H1 (cell line): ENCODE measurements at regions of chr6 and their contacts with region 1.

Region 1: DNA sequence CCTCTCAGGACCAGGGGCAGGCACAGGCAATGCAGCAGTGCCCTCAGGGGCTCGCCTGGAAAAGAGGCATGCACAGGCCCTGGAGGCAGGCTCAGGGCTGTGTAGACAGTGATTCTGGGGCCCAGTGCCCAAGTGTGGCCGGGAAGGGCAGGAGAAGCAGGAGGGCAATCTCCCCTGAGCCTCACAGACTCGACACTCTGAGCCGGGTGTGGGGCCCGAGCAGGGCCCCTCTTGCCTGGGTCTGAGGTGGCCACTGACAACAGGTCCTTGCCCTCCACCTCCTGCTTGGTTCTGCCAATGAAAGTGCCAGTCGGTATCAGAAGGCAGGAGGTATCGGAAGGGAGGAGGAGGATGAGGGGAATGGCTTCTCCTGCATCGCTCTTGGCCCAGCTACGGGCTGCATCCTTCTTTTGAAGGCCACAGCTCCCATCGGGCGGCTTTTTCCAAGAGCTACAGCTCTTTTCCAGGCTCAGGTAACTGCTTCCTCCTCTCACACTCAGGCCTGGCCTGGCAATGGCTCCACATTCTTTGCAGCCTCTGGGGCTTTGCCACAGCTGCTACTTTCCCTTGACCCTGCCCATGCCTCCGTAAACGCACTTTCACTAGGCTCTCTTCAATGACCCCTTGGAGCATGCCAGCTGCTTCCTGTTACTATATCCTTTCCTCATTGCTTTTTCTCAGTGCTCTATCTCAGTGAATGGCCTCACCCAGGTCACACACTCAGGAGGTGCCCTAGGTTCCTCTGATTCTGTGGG is 24.5 kb downstream of the GABRR2 start:
- DNase-seq: no peak
- H3K4me3 ChIP-seq: no peak overlapping the region
- H3K27ac ChIP-seq: no peak overlapping the region
- H3K4me1 ChIP-seq: peaks cover 0 to 5% (median under 1%) of the 10 kb centered on the region in 4 experiments; a peak in 4 of 7 replicates
- H3K27me3 ChIP-seq: no peaks in the 10 kb centered on the region
- CTCF ChIP-seq: no peak
- EP300 ChIP-seq: no peak
- POLR2A ChIP-seq: no peak
- RAD21 ChIP-seq: no peak

Region 2: DNA sequence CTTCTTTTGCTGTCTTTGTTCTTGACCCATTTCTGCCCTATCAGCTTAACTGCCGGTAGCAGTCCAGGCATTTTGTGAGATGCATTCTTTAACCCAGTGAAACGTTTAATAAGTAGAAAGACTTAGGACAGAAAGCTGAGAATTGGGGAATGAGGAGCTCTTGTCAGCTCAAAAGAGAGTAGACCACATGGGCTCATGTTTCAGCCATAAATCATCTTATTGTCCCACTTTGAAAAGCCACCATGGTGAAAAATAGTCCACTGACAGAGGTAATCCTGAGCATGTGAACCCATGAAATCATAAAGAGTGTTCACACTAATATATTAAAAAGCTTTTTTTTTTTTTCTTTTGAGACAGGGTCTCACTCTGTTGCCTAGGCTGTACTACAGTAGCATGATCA is 1684.4 kb before region 1 on chr6:
- CTCF ChIA-PET with region 1: no interaction called
- POLR2A ChIA-PET with region 1: no interaction called
- DNase-seq: no peak
- H3K4me3 ChIP-seq: no peak overlapping the region
- H3K27ac ChIP-seq: no peak overlapping the region
- H3K4me1 ChIP-seq: peaks cover 0 to 4% (median 1%) of the 10 kb centered on the region in 4 experiments; a peak in 3 of 7 replicates
- H3K27me3 ChIP-seq: no peaks in the 10 kb centered on the region
- CTCF ChIP-seq: no peak
- EP300 ChIP-seq: no peak
- POLR2A ChIP-seq: no peak
- RAD21 ChIP-seq: no peak

Region 3: DNA sequence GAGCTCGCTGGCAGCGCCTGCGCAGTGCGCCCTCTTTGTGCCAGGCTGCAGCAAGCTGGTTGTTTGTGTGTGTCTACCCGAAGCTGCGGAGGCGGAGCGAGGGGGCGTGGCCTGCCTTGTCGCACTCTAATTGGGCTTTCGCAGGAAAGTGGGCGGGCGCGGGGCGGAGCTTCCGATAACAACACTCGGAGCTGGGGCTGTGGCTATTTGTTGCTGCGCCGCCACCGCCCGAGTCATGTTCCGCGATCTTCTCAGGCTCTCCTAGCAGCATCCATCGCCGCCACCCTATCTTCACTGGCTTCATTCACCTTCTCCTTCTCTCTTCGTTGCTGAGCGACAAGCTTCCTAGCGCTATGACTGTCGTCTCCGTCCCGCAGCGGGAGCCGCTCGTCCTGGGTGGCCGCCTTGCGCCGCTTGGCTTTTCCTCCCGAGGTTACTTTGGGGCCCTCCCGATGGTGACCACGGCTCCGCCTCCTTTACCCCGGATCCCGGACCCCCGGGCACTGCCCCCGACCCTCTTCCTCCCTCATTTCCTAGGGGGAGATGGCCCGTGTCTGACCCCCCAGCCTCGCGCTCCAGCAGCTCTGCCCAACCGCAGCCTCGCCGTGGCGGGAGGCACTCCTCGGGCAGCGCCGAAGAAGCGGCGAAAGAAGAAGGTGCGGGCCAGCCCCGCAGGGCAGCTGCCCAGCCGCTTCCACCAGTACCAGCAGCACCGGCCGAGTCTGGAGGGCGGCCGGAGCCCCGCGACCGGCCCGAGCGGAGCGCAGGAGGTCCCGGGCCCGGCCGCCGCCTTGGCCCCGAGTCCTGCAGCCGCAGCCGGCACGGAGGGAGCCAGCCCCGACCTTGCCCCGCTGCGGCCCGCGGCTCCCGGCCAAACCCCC is 209.8 kb before region 1 on chr6 and contains the start of gene PNRC1:
- CTCF ChIA-PET with region 1: no interaction called
- POLR2A ChIA-PET with region 1: no interaction called
- DNase-seq: peak; percentile 100
- H3K4me3 ChIP-seq: peak within 1 kb of the TSS; percentile 79 to 98 (median 94)
- H3K27ac ChIP-seq: peak within 1 kb of the TSS; percentile 95
- H3K4me1 ChIP-seq: peaks cover 8 to 26% (median 13%) of the 10 kb centered on the region in 4 experiments
- H3K27me3 ChIP-seq: no peaks in the 10 kb centered on the region
- CTCF ChIP-seq: no peak
- EP300 ChIP-seq: 0 out of 3 replicates have a peak, but pooled peaks of 1 of the 2 experiments have one; percentile 4
- POLR2A ChIP-seq: peak; percentile 95 to 100
- RAD21 ChIP-seq: no peak
- total RNA-seq, gene PNRC1: 48.5 and 50.2 TPM in 2 replicates

Region 4: GRCh38 chr6:89302936-89303335 is 12.4 kb after region 1 on chr6:
- CTCF ChIA-PET with region 1: interaction called, 14 read pairs
- POLR2A ChIA-PET with region 1: interaction called, 3 read pairs
- DNase-seq: no peak
- H3K4me3 ChIP-seq: no peak overlapping the region
- H3K27ac ChIP-seq: no peak overlapping the region
- H3K4me1 ChIP-seq: peaks cover 0 to 6% (median 0%) of the 10 kb centered on the region in 4 experiments; a peak in 3 of 7 replicates
- H3K27me3 ChIP-seq: no peaks in the 10 kb centered on the region
- CTCF ChIP-seq: no peak
- EP300 ChIP-seq: no peak
- POLR2A ChIP-seq: no peak
- RAD21 ChIP-seq: no peak

Region 5: GRCh38 chr6:89321131-89321970 is 30.8 kb after region 1 on chr6:
- CTCF ChIA-PET with region 1: no interaction called
- POLR2A ChIA-PET with region 1: no interaction called
- DNase-seq: no peak
- H3K4me3 ChIP-seq: no peak overlapping the region
- H3K27ac ChIP-seq: no peak overlapping the region
- H3K4me1 ChIP-seq: peaks cover 0 to 2% (median 0%) of the 10 kb centered on the region in 4 experiments; a peak in 1 of 7 replicates
- H3K27me3 ChIP-seq: no peaks in the 10 kb centered on the region
- CTCF ChIP-seq: no peak
- EP300 ChIP-seq: no peak
- POLR2A ChIP-seq: no peak
- RAD21 ChIP-seq: no peak